Ovary (tissue), 10 donors: ENCODE measurements at regions of chr2 and their contacts with region 1.

Region 1: DNA sequence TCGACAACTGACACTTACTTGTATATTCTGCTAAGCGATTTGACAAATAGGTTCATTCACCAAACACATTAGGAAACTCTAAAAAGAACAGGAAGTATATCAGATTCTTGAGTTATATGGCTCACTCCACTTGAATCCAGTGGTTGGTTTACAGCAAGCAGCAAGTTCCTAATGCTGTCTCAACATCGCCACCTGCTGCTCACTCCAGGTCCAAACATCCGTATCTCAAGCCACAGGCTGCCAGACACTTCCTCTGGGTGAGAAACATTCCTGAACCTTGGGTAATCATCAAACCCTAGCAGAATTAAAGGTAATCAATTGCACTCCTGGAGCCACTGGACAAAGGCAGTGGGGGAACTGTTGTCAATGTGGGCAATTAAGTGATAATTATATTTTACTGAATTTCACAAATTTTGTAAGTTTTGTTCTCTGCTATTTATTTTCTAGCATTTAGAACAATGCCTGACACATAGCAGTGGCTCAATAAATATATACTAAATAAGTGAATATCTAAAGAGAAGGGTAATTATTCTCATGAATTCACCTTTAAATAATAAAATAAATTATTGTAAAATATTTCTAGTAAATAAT is 107.1 kb upstream of the TTN start:
- DNase-seq: peak; percentile 73 to 88 (median 85)
- H3K4me3 ChIP-seq: no peak overlapping the region
- H3K27ac ChIP-seq: no peak overlapping the region
- H3K4me1 ChIP-seq: peaks cover 1% of the 10 kb centered on the region
- H3K27me3 ChIP-seq: no peaks in the 10 kb centered on the region
- CTCF ChIP-seq: peak; percentile 59 to 74 (median 67)
- EP300 ChIP-seq: no peak
- POLR2A ChIP-seq: no peak

Region 2: GRCh38 chr2:178796079-178796677 is 118.2 kb before region 1 on chr2:
- intact Hi-C with region 1: loop called (anchors 1 to 5 kb)
- DNase-seq: no peak
- H3K4me3 ChIP-seq: no peak overlapping the region
- H3K27ac ChIP-seq: no peak overlapping the region
- H3K4me1 ChIP-seq: no peaks in the 10 kb centered on the region
- H3K27me3 ChIP-seq: no peaks in the 10 kb centered on the region
- CTCF ChIP-seq: peak; percentile 45 to 69 (median 45)
- EP300 ChIP-seq: no peak
- POLR2A ChIP-seq: no peak